Dendritic cell treated with granulocyte-macrophage colony-stimulating factor and Interleukin-4, amounts not matched to agents 40 ng/mL and 50 ng/mL, for 4 days (primary cell): ENCODE measurements at regions of chr10 and their contacts with region 1.

Region 1: DNA sequence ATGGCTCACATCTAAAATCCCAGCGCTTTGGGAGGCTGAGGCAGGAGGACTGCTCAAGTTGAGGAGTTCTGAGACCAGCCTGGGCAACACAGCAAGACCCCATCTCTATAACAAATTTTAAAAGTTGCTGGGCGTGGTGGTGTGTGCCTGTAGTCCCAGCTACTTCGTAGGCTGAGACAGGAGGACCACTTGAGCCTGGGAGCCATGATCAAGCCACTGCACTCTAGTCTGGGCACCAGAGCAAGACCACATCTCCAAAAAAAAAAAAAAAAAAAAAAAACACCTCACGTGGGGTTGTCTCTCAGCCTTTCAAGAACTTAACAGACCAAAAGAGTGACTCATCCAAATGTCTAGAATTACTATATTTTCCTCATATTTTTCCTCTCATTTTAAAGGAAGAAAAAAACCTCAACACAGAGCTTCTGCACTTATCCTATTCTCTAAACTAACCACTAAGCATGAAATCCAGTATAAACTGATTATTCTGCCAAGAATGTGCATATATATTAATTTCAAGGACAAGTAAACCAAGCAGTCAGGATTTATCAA is 46.3 kb downstream of the CUL2 start:
- H3K4me3 Mint-ChIP-seq: no peak overlapping the region
- H3K27ac Mint-ChIP-seq: no peak overlapping the region
- H3K4me1 Mint-ChIP-seq: peaks cover 12% of the 10 kb centered on the region
- H3K27me3 Mint-ChIP-seq: no peaks in the 10 kb centered on the region

Region 2: DNA sequence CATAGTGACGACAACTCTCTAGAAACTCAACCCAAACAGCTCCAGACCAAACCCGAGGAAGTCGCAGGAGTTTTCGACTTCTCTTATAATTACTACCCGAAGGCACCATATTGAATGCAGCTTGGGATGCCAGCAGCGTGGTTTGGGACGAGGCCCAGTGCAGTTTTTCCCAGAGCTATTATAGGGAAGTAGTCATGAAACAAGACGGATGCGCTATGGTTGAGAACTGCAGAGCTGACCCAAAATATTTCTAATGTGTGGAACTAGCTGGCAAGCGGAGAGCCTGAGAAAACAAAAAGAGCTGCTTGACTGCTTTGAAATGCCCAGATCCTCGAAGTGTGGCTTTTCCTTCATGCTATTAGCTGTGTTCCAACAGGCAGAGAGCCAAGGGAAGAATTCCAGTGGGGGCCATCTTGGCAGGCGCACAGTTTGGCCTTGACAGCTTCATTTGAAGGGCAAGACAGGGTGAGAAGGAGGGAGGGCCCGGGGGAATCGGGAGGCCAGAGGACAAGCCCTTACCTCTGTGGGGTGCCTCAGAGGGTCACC is 76.5 kb before region 1 on chr10:
- intact Hi-C with region 1: no loop called
- H3K4me3 Mint-ChIP-seq: no peak overlapping the region
- H3K27ac Mint-ChIP-seq: no peak overlapping the region
- H3K4me1 Mint-ChIP-seq: no peaks in the 10 kb centered on the region
- H3K27me3 Mint-ChIP-seq: no peaks in the 10 kb centered on the region

Region 3: DNA sequence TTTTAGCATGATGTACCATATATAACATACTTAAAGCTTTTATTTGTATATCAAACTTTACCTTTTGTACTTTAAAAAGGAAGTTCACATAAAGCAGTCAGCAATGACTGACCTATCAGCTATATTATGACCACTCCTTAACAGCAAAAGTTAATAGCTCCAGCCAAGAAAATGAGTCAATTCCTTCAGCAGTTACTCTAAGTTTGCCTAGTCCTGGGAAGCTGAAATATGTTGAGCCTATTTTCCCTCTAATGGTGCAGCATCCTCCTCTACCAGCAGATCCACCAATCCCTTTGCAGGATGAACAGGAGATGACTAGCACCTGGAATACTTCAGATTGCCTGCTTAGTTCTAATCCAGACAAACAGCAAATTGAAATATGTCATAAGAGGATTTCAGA is 18.0 kb before region 1 on chr10:
- intact Hi-C with region 1: loop called (anchors 2 kb)
- H3K4me3 Mint-ChIP-seq: no peak overlapping the region
- H3K27ac Mint-ChIP-seq: no peak overlapping the region
- H3K4me1 Mint-ChIP-seq: no peaks in the 10 kb centered on the region
- H3K27me3 Mint-ChIP-seq: no peaks in the 10 kb centered on the region